MCF 10A (cell line): ENCODE measurements at regions of chr2 and their contacts with region 1.

Region 1: GRCh38 chr2:173027181-173028128 is 48.2 kb upstream of the MAP3K20 start:
- DNase-seq: peak; percentile 88
- H3K4me3 Mint-ChIP-seq: no peak overlapping the region
- H3K27ac Mint-ChIP-seq: peak overlapping the region; percentile 9
- H3K4me1 Mint-ChIP-seq: peaks cover 12% of the 10 kb centered on the region
- H3K27me3 Mint-ChIP-seq: no peaks in the 10 kb centered on the region
- CTCF ChIP-seq: peak; percentile 79

Region 2: DNA sequence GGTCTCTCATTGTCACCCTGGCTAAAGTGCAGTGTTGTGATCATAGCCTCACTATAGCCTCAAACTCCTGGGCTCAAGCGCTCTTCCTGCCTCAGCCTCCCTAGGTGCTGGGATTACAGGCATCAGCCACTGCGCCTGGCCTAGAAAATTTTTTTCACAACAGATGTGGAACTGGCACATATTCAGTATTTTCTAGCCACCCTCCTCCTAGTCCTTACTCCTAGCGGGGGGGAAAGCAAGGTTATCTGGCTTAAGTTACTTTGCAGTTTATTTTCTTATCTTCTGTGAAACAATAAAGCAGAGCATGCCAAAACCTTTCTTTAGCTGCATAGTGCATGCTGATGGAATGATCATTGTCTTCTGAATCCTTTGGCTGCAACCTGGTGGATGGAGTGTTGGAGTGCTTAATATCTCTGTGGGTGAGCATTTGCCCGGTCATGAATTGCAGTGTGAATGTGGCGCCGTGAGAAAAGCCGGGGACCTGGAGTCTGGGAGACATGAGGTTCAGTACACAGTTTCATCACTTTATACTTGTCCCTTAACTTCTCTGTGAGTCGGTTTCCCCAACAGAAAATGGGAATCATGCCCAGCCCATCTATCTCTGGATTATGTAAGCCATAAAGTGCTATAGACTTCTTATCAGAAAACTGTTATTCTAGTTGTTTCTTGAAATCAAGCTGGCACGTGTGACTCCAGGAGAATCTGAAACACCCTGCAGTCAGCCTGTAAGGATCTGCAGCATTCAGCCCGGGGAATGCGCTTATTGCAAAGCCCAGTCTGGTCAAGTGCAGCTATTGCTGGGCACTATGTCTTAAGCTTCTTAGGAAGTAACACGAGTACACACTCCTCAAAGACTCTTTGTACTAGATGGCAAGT is 10.0 kb after region 1 on chr2:
- CTCF ChIA-PET with region 1: interaction called, 16 read pairs
- POLR2A ChIA-PET with region 1: interaction called, 3 read pairs
- intact Hi-C with region 1: no loop called
- DNase-seq: no peak
- H3K4me3 Mint-ChIP-seq: no peak overlapping the region
- H3K27ac Mint-ChIP-seq: no peak overlapping the region
- H3K4me1 Mint-ChIP-seq: peaks cover 5% of the 10 kb centered on the region
- H3K27me3 Mint-ChIP-seq: no peaks in the 10 kb centered on the region
- CTCF ChIP-seq: no peak

Region 3: DNA sequence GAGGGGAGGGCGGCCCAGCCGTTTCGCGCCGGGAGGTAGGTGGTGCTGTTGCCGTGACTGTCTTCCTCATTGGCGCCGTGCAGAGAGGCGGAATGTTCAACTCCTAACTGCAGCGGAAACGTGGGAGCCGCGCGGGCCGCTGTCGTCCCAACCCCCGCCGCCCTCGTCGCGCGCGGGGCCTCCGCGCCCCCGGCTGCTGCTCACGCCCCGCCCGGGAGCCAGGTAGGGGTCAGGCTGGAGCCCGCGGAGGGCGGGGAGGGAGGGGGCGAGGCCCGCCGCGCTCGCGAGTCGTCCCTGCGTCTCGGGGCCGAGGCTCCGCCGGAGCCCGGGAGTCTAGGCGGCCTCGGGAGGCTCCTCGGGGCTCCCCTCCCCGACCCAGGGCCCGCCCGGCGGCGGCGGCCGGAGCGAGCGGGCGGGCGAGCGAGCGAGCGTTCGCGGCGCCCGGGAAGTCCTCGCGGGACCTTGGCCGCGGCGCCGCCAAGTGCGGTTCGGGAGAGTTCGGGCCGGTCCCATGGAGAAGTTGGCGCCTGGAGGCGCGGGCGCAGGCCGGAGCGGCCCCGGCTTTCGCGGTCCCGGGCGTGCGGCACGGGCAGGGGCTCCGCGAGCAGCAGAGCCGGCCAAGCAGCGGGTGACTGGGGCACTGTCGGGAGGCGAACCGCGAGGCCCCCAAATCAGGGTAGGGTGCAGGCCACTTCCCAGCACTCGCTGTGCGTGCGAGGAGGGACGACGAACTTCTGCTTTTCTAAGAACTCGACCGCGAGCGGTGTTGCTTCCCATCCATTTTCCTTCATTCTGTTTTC is 48.5 kb after region 1 on chr2 and contains the start of gene MAP3K20:
- CTCF ChIA-PET with region 1: interaction called, 21 read pairs
- POLR2A ChIA-PET with region 1: interaction called, 26 read pairs
- intact Hi-C with region 1: loop called (anchors 1 kb)
- DNase-seq: peak; percentile 72
- H3K4me3 Mint-ChIP-seq: peak within 1 kb of the TSS; percentile 82
- H3K27ac Mint-ChIP-seq: peak within 1 kb of the TSS; percentile 95
- H3K4me1 Mint-ChIP-seq: peaks cover 31% of the 10 kb centered on the region
- H3K27me3 Mint-ChIP-seq: no peaks in the 10 kb centered on the region
- CTCF ChIP-seq: peak; percentile 40
- total RNA-seq, gene MAP3K20: 134 and 150 TPM in 2 replicates

Region 4: DNA sequence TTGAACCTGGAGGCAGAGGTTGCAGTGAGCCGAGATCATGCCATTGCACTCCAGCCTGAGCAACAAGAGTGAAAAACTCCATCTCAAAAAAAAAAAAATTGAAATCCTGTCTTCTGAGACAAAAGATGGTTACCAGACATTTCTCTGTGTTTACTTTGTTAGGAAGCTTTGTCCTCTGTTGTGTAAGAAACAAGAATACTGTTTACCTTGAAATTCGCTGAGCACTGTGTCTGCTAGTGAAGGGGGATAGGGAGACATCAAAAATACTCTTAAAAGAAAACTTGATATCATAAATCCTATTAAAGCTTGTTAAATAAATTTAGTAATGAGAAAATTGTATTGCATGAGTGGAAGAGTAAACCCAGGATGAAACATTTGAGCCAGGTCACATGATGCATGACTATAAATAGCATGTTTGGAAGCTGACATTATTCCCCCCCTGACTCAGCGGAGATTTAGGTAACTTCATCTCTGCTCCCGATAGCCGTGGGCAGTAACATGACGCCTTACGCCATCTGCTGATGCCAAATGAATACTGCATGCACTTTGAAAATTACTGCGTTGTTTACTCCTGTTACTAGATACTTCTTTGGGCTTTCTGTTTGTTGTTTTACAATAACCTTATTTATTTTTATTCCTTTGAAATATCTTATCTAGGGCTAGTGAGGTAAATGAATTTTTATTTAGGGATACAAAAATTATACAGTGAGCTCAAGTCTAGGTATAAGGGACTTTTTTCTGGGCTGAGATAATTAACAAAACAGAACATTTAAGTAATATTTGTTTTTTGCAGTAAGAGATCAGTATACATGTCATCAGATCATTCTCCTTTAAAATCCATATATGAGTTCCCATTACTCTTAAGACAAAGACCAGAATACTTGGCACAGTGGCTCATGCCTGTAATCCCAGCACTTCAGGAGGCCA is 183.1 kb after region 1 on chr2:
- CTCF ChIA-PET with region 1: interaction called, 237 read pairs
- POLR2A ChIA-PET with region 1: interaction called, 56 read pairs
- intact Hi-C with region 1: loop called (anchors 1 kb)
- DNase-seq: peak; percentile 94
- H3K4me3 Mint-ChIP-seq: no peak overlapping the region
- H3K27ac Mint-ChIP-seq: peak overlapping the region; percentile 93
- H3K4me1 Mint-ChIP-seq: peaks cover 9% of the 10 kb centered on the region
- H3K27me3 Mint-ChIP-seq: no peaks in the 10 kb centered on the region
- CTCF ChIP-seq: peak; percentile 84

Region 5: GRCh38 chr2:173271825-173272224 is 244.4 kb after region 1 on chr2:
- CTCF ChIA-PET with region 1: no interaction called
- POLR2A ChIA-PET with region 1: no interaction called
- intact Hi-C with region 1: no loop called
- DNase-seq: peak; percentile 68
- H3K4me3 Mint-ChIP-seq: no peak overlapping the region
- H3K27ac Mint-ChIP-seq: no peak overlapping the region
- H3K4me1 Mint-ChIP-seq: peaks cover 14% of the 10 kb centered on the region
- H3K27me3 Mint-ChIP-seq: no peaks in the 10 kb centered on the region
- CTCF ChIP-seq: no peak

Region 6: GRCh38 chr2:173354601-173355131 is 327.2 kb after region 1 on chr2 and contains the start of gene CDCA7:
- CTCF ChIA-PET with region 1: interaction called, 4 read pairs
- POLR2A ChIA-PET with region 1: no interaction called
- intact Hi-C with region 1: loop called (anchors 5 kb)
- DNase-seq: peak; percentile 74
- H3K4me3 Mint-ChIP-seq: peak within 1 kb of the TSS; percentile 88
- H3K27ac Mint-ChIP-seq: peak within 1 kb of the TSS; percentile 86
- H3K4me1 Mint-ChIP-seq: peaks cover 9% of the 10 kb centered on the region
- H3K27me3 Mint-ChIP-seq: peaks cover 25% of the 10 kb centered on the region
- CTCF ChIP-seq: no peak
- total RNA-seq, gene CDCA7: 6.2 and 14.0 TPM in 2 replicates

Region 7: GRCh38 chr2:173612355-173612754 is 584.9 kb after region 1 on chr2:
- CTCF ChIA-PET with region 1: no interaction called
- POLR2A ChIA-PET with region 1: no interaction called
- intact Hi-C with region 1: no loop called
- DNase-seq: no peak
- H3K4me3 Mint-ChIP-seq: no peak overlapping the region
- H3K27ac Mint-ChIP-seq: no peak overlapping the region
- H3K4me1 Mint-ChIP-seq: no peaks in the 10 kb centered on the region
- H3K27me3 Mint-ChIP-seq: no peaks in the 10 kb centered on the region
- CTCF ChIP-seq: no peak

Region 8: GRCh38 chr2:174341286-174341994 is 1314.0 kb after region 1 on chr2:
- CTCF ChIA-PET with region 1: no interaction called
- POLR2A ChIA-PET with region 1: no interaction called
- intact Hi-C with region 1: loop called (anchors 5 kb)
- DNase-seq: peak; percentile 75
- H3K4me3 Mint-ChIP-seq: peak overlapping the region; percentile 2
- H3K27ac Mint-ChIP-seq: no peak overlapping the region
- H3K4me1 Mint-ChIP-seq: peaks cover 11% of the 10 kb centered on the region
- H3K27me3 Mint-ChIP-seq: no peaks in the 10 kb centered on the region
- CTCF ChIP-seq: peak; percentile 97